Body of pancreas (tissue), 4 donors: ENCODE measurements at regions of chr4 and their contacts with region 1.

Region 1: DNA sequence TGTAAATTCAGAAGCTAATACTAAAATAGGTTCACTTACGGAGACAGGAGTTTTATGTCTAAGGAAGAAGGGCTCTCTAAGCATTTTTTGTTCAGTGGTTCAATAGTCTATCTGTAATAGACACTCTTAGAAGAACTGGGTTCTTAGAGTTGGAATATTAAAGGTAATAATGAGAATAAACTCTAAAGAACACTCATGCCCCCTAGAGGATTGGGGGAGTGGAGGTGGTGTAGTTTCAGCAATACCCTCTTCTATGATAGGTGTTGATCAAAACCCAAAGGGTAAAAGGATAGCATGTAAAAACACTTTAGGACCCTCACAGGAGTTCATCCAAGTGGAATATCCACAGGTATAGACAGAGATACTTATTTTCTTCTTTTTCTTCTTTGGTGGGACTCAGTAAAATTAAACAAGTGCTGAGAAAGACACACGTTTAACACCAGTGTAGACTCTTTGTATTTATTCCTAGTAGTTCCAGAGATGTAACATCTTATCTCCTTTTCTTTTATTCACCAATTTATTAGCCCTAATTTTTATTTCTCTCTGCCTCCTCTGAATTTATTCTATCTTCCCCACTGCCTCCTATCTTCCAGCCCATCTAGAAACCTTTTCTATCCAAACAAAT is 25.7 kb upstream of the MND1 start:
- DNase-seq: peak; percentile 29 to 56 (median 45)
- ATAC-seq: peak; percentile 67
- H3K4me3 ChIP-seq: no peak overlapping the region
- H3K27ac ChIP-seq: no peak overlapping the region
- H3K4me1 ChIP-seq: no peaks in the 10 kb centered on the region
- H3K27me3 ChIP-seq: no peaks in the 10 kb centered on the region
- CTCF ChIP-seq: peak; percentile 44 to 74 (median 68)
- POLR2A ChIP-seq: no peak

Region 2: GRCh38 chr4:153142700-153143438 is 175.9 kb before region 1 on chr4:
- intact Hi-C with region 1: loop called (anchors 5 kb)
- DNase-seq: peak; percentile 80 to 91 (median 83)
- ATAC-seq: peak; percentile 84
- H3K4me3 ChIP-seq: no peak overlapping the region
- H3K27ac ChIP-seq: peak overlapping the region; percentile 50 to 75 (median 63)
- H3K4me1 ChIP-seq: peaks cover 13% of the 10 kb centered on the region
- H3K27me3 ChIP-seq: no peaks in the 10 kb centered on the region
- CTCF ChIP-seq: peak; percentile 69 to 91 (median 88)
- POLR2A ChIP-seq: no peak

Region 3: GRCh38 chr4:153211986-153212729 is 106.7 kb before region 1 on chr4:
- intact Hi-C with region 1: loop called (anchors 10 kb)
- DNase-seq: no peak
- ATAC-seq: no peak
- H3K4me3 ChIP-seq: no peak overlapping the region
- H3K27ac ChIP-seq: no peak overlapping the region
- H3K4me1 ChIP-seq: peaks cover 18% of the 10 kb centered on the region
- H3K27me3 ChIP-seq: no peaks in the 10 kb centered on the region
- CTCF ChIP-seq: no peak
- POLR2A ChIP-seq: no peak

Region 4: GRCh38 chr4:153549401-153549800 is 230.6 kb after region 1 on chr4:
- intact Hi-C with region 1: no loop called
- DNase-seq: no peak
- ATAC-seq: no peak
- H3K4me3 ChIP-seq: no peak overlapping the region
- H3K27ac ChIP-seq: peak overlapping the region in 1 of 4 donors; percentile 11
- H3K4me1 ChIP-seq: peaks cover 38% of the 10 kb centered on the region
- H3K27me3 ChIP-seq: no peaks in the 10 kb centered on the region
- CTCF ChIP-seq: no peak
- POLR2A ChIP-seq: no peak